ENCODE measurements at regions of chr12 and their contacts with region 1.

Region 1: GRCh38 chr12:53427905-53428594 is 4.4 kb downstream of the AMHR2 start:
- DNase-seq: no peak
- ATAC-seq: peak; percentile 56
- H3K4me3 ChIP-seq: no peak overlapping the region
- H3K27ac ChIP-seq: no peak overlapping the region
- H3K4me1 ChIP-seq: no peaks in the 10 kb centered on the region
- H3K27me3 ChIP-seq: no peaks in the 10 kb centered on the region
- CTCF ChIP-seq: no peak
- EP300 ChIP-seq: no peak
- POLR2A ChIP-seq: no peak
- RAD21 ChIP-seq: no peak

Region 2: DNA sequence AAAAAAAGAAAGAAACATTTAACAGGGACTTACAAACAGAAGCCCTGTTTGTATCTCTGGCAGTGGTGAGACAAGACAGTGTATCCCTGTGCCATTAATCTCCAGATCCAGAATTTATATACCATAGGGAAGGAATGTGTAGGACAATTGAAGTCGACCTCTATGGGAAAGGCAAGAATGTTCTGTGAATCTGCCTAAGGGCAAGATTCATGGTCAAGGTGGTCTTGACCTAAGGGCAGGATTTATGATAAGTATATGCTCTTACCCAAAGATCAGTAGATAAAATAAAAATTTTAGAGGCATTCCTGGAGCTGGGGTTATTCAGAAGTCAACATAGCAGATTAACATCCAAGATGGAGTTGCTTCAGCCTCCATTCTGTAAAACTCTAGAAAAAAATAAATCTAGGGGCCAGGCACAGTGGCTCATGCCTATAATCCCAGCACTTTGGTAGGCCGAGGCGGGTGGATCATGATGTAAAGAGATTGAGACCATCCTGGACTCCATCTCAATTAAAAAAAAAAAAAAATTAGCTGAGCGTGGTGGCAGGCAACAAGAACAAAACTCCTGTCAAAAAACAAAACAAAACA is 69.1 kb before region 1 on chr12:
- CTCF ChIA-PET with region 1: interaction called, 225 read pairs
- POLR2A ChIA-PET with region 1: interaction called, 8 read pairs
- RAD21 ChIA-PET with region 1: interaction called, 90 read pairs
- SMC1A ChIA-PET with region 1: interaction called, 164 read pairs
- in situ Hi-C with region 1: no loop called
- intact Hi-C with region 1: no loop called
- DNase-seq: no peak
- ATAC-seq: no peak
- H3K4me3 ChIP-seq: no peak overlapping the region
- H3K27ac ChIP-seq: no peak overlapping the region
- H3K4me1 ChIP-seq: peaks cover 2% of the 10 kb centered on the region
- H3K27me3 ChIP-seq: no peaks in the 10 kb centered on the region
- CTCF ChIP-seq: no peak
- EP300 ChIP-seq: no peak
- POLR2A ChIP-seq: no peak
- RAD21 ChIP-seq: no peak

Region 3: GRCh38 chr12:53551889-53552291 is 123.8 kb after region 1 on chr12:
- CTCF ChIA-PET with region 1: no interaction called
- POLR2A ChIA-PET with region 1: no interaction called
- RAD21 ChIA-PET with region 1: no interaction called
- SMC1A ChIA-PET with region 1: no interaction called
- in situ Hi-C with region 1: no loop called
- intact Hi-C with region 1: no loop called
- DNase-seq: no peak
- ATAC-seq: no peak; the same call in 2 of the 3 replicates
- H3K4me3 ChIP-seq: no peak overlapping the region
- H3K27ac ChIP-seq: no peak overlapping the region
- H3K4me1 ChIP-seq: no peaks in the 10 kb centered on the region
- H3K27me3 ChIP-seq: no peaks in the 10 kb centered on the region
- CTCF ChIP-seq: 0 out of 6 replicates have a peak, but pooled peaks of 1 of the 3 experiments have one; percentile 6
- EP300 ChIP-seq: no peak
- POLR2A ChIP-seq: no peak
- RAD21 ChIP-seq: no peak

Measured in GM12878 (cell line).